Body of pancreas (tissue), 4 donors: ENCODE measurements at regions of chr2 and their contacts with region 1.

Region 1: GRCh38 chr2:26685989-26686839 is 6.3 kb upstream of the KCNK3 start:
- DNase-seq: peak; percentile 58 to 76 (median 68)
- ATAC-seq: peak; percentile 57
- H3K4me3 ChIP-seq: no peak overlapping the region
- H3K27ac ChIP-seq: peak overlapping the region; percentile 45 to 79 (median 60)
- H3K4me1 ChIP-seq: peaks cover 47% of the 10 kb centered on the region
- H3K27me3 ChIP-seq: no peaks in the 10 kb centered on the region
- CTCF ChIP-seq: peak in 1 of 7 experiments; percentile 18
- POLR2A ChIP-seq: no peak

Region 2: GRCh38 chr2:26735096-26735495 is 48.9 kb after region 1 on chr2:
- intact Hi-C with region 1: loop called (anchors 10 kb)
- DNase-seq: peak in 1 of 4 donors; percentile 48
- ATAC-seq: peak; percentile 60
- H3K4me3 ChIP-seq: no peak overlapping the region
- H3K27ac ChIP-seq: no peak overlapping the region
- H3K4me1 ChIP-seq: no peaks in the 10 kb centered on the region
- H3K27me3 ChIP-seq: no peaks in the 10 kb centered on the region
- CTCF ChIP-seq: no peak
- POLR2A ChIP-seq: no peak

Region 3: GRCh38 chr2:26764078-26764887 is 78.1 kb after region 1 on chr2 and contains the start of gene SLC35F6:
- intact Hi-C with region 1: no loop called
- DNase-seq: peak; percentile 84 to 89 (median 86)
- ATAC-seq: peak; percentile 97
- H3K4me3 ChIP-seq: peak within 1 kb of the TSS; percentile 68 to 81
- H3K27ac ChIP-seq: peak within 1 kb of the TSS; percentile 64 to 87 (median 78)
- H3K4me1 ChIP-seq: peaks cover 34% of the 10 kb centered on the region
- H3K27me3 ChIP-seq: no peaks in the 10 kb centered on the region
- CTCF ChIP-seq: peak in 2 of 7 experiments; percentile 0 to 7
- POLR2A ChIP-seq: peak; percentile 67 to 86 (median 86)
- total RNA-seq, gene SLC35F6: 17.8 to 21.8 TPM

Region 4: DNA sequence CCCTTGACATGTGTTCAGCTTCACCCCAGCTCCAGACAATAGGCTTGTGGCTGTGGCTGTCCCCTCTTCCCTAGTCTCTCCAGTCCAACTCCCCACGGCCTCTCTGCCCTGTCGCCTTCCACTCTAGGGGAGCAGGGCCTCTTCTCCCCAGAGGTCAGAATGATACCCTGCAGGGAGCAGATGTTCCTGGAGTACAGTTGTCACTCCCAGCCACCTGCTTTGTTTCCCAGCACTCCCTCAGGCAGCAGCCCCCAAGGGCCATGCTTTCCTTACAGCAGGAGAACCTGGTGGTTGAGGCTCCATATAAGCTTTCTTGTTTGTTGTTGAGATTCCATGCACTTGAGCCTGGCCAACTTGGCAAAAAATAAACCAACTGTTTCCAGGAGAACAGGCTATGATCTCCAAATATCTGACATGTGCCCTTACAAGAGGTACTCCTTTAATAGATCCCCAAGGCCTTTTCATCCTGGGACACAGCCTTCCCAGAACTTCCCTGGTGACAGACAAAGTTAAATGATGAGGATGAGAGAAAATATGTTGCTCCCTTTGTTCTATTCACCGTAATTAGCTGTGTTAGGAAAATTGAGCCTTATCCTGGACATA is 206.8 kb after region 1 on chr2:
- intact Hi-C with region 1: no loop called
- DNase-seq: no peak
- ATAC-seq: no peak
- H3K4me3 ChIP-seq: no peak overlapping the region
- H3K27ac ChIP-seq: no peak overlapping the region
- H3K4me1 ChIP-seq: no peaks in the 10 kb centered on the region
- H3K27me3 ChIP-seq: no peaks in the 10 kb centered on the region
- CTCF ChIP-seq: no peak
- POLR2A ChIP-seq: no peak

Region 5: DNA sequence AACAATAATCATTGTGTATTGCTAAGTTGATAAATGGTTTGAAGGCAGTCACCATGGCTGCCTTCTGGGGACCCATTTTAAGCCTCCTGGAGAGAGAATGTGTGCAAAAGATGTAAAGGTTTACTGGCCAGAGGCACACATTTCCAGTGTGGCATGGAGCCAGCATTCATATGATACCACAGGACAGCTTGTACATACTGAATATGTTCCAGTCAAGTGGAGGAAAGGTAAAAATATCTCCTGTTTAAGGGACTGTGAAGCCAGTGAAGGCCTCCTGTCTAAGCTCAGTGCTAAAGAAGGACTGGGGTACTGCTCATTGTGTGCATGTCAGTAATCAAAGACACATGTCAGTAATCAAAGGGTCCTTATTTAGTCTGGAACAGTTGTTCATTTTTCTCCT is 1323.5 kb after region 1 on chr2:
- intact Hi-C with region 1: no loop called
- DNase-seq: peak in 2 of 4 donors; percentile 24 to 48
- ATAC-seq: no peak
- H3K4me3 ChIP-seq: no peak overlapping the region
- H3K27ac ChIP-seq: no peak overlapping the region
- H3K4me1 ChIP-seq: no peaks in the 10 kb centered on the region
- H3K27me3 ChIP-seq: no peaks in the 10 kb centered on the region
- CTCF ChIP-seq: no peak
- POLR2A ChIP-seq: no peak